IMR-90 (cell line): ENCODE measurements at regions of chr16 and their contacts with region 1.

Region 1: GRCh38 chr16:12739738-12740137 is 63.9 kb downstream of the CPPED1 start:
- DNase-seq: no peak
- ATAC-seq: no peak
- H3K4me3 ChIP-seq: no peak overlapping the region
- H3K27ac ChIP-seq: no peak overlapping the region
- H3K4me1 ChIP-seq: no peaks in the 10 kb centered on the region
- H3K27me3 ChIP-seq: no peaks in the 10 kb centered on the region
- CTCF ChIP-seq: no peak
- POLR2A ChIP-seq: no peak
- RAD21 ChIP-seq: no peak

Region 2: DNA sequence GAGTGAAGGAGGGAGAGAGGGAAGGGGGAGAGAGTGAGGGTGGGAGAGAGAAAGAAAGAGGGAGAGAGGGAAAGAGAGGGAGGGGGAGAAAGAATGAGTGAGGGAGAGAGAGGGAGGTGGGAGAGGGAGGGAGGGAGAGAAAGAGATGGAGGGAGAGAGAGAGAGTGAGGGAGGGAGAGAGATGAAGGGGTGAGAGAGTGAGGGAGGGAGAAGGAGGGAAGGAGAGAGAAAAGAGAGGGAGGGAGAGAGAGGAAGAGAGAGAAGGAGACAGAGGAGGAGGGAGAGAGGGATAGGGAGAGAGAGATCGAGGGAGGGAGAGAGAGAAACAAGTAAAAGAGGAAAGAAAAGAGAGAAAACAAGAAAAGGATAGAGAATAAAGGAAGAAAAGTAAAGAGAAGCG is 387.4 kb after region 1 on chr16:
- CTCF ChIA-PET with region 1: no interaction called
- POLR2A ChIA-PET with region 1: interaction called, 16 read pairs
- dilution Hi-C with region 1: no loop called
- in situ Hi-C with region 1: no loop called
- intact Hi-C with region 1: no loop called
- DNase-seq: no peak
- ATAC-seq: no peak
- H3K4me3 ChIP-seq: no peak overlapping the region
- H3K27ac ChIP-seq: no peak overlapping the region
- H3K4me1 ChIP-seq: no peaks in the 10 kb centered on the region
- H3K27me3 ChIP-seq: no peaks in the 10 kb centered on the region
- CTCF ChIP-seq: no peak
- POLR2A ChIP-seq: no peak
- RAD21 ChIP-seq: no peak